ENCODE measurements at regions of chr21 and their contacts with region 1.

Region 1: GRCh38 chr21:40466893-40467501 is 380.0 kb downstream of the DSCAM start:
- DNase-seq: peak in 1 of 7 donors; percentile 8
- H3K4me3 ChIP-seq: no peak overlapping the region
- H3K27ac ChIP-seq: no peak overlapping the region
- H3K4me1 ChIP-seq: no peaks in the 10 kb centered on the region
- H3K27me3 ChIP-seq: no peaks in the 10 kb centered on the region
- CTCF ChIP-seq: peak; percentile 8 to 45 (median 28)
- POLR2A ChIP-seq: no peak

Region 2: GRCh38 chr21:40547906-40548513 is 81.0 kb after region 1 on chr21:
- intact Hi-C with region 1: no loop called
- DNase-seq: no peak
- H3K4me3 ChIP-seq: no peak overlapping the region
- H3K27ac ChIP-seq: no peak overlapping the region
- H3K4me1 ChIP-seq: no peaks in the 10 kb centered on the region
- H3K27me3 ChIP-seq: no peaks in the 10 kb centered on the region
- CTCF ChIP-seq: no peak
- POLR2A ChIP-seq: no peak

Region 3: DNA sequence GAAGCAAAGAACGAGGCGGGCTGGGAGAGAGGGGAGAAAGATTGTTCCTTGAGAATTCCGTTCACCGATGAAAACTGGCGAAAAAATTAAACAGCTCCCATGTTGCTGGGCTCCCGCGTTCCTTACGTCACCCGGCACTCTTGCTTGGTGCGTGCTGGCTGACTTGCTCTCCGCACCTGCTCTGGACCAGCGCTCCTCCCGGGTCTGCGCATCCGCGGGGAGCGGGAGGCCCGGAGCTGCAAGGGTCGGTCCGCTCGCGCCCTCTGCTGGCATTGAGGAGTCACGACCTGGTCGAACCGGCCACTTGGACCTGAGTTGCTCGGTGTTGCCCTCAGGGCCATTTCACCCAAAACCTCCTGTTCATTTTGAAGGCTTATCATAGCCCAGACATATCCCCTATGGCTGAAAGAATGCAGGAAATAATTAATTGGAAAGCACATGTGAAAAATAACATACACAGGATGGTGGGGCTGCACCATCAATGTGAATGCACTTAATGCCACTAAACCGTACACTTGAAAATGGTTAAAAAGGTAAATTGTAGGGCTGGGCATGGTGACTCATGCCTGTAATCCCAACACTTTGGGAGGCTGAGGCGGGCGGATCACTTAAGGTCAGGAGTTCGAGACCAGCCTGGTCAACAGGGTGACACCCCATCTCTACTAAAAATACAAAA is 602.1 kb after region 1 on chr21:
- intact Hi-C with region 1: loop called in 1 of 2 experiments (anchors 10 kb)
- DNase-seq: peak; percentile 60 to 87 (median 81)
- H3K4me3 ChIP-seq: peak overlapping the region in 1 of 4 donors; percentile 32
- H3K27ac ChIP-seq: no peak overlapping the region
- H3K4me1 ChIP-seq: no peaks in the 10 kb centered on the region
- H3K27me3 ChIP-seq: peaks cover 11% of the 10 kb centered on the region
- CTCF ChIP-seq: peak; percentile 60 to 85 (median 76)
- POLR2A ChIP-seq: no peak